ENCODE measurements at regions of chr5 and their contacts with region 1.

Region 1: GRCh38 chr5:133968049-133968980 is at the start of gene C5orf15:
- DNase-seq: peak; percentile 91 to 98
- H3K4me3 ChIP-seq: peak within 1 kb of the TSS; percentile 69 to 77
- H3K27ac ChIP-seq: peak within 1 kb of the TSS; percentile 93
- H3K4me1 ChIP-seq: peaks cover 0 to 2% of the 10 kb centered on the region in 2 donors
- H3K27me3 ChIP-seq: no peaks in the 10 kb centered on the region
- CTCF ChIP-seq: peak in 2 of 3 experiments; percentile 12 to 22
- total RNA-seq, gene C5orf15: 177 TPM

Region 2: GRCh38 chr5:133930061-133930812 is 38.1 kb before region 1 on chr5:
- intact Hi-C with region 1: loop called (anchors 2 kb)
- DNase-seq: peak; percentile 19 to 84
- H3K4me3 ChIP-seq: peak overlapping the region in 1 of 2 donors; percentile 44
- H3K27ac ChIP-seq: peak overlapping the region; percentile 45 to 60
- H3K4me1 ChIP-seq: peaks cover 4 to 30% of the 10 kb centered on the region in 2 donors
- H3K27me3 ChIP-seq: no peaks in the 10 kb centered on the region
- CTCF ChIP-seq: no peak

Region 3: DNA sequence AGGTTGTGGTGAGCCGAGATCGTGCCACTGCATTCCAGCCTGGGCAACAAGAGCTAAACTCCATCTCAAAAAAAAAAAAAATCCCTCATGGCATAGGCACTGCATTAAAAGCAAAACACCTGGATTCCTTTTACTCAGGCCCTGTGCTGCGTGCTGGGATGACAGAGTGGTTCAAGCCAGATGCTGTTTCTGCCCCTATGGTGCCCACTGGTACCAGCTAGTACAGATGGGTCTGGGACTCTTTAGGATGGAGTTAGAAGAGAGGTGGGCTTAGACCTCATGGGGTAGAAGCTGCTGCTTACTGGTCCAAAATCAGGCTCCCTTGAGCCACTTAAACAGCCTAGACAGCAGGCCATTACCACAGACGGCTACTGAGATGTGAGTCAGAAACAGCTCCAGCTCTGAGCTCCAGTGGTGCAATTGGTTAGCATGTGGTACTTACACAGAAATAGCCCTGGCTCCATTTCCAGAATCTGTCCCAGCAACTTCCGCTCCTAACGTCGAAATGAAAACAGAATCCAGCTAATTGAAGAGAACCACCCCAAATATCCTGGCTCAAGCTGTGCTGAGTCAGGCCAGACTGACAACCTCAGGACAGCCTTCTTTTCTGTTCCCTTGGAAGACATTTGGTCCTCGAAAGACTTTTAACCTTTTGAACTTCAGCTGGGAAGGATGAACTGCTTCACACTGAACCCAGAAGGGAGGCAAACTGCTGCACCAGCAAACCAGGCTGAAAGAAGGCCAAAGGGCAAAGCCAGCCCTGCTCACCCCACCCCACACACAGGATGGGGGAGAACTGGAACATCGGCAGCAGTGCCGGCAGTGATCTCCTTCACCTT is 15.4 kb before region 1 on chr5:
- intact Hi-C with region 1: loop called (anchors 1 kb)
- DNase-seq: peak; percentile 64 to 95
- H3K4me3 ChIP-seq: no peak overlapping the region
- H3K27ac ChIP-seq: peak overlapping the region; percentile 91 to 95
- H3K4me1 ChIP-seq: peaks cover 18 to 33% of the 10 kb centered on the region in 2 donors
- H3K27me3 ChIP-seq: no peaks in the 10 kb centered on the region
- CTCF ChIP-seq: no peak

Region 4: GRCh38 chr5:133985540-133986180 is 17.3 kb after region 1 on chr5:
- intact Hi-C with region 1: no loop called
- DNase-seq: no peak
- H3K4me3 ChIP-seq: no peak overlapping the region
- H3K27ac ChIP-seq: no peak overlapping the region
- H3K4me1 ChIP-seq: no peaks in the 10 kb centered on the region
- H3K27me3 ChIP-seq: no peaks in the 10 kb centered on the region
- CTCF ChIP-seq: no peak

Region 5: GRCh38 chr5:134004592-134005375 is 36.5 kb after region 1 on chr5 and contains the start of gene VDAC1:
- intact Hi-C with region 1: loop called (anchors 1 kb)
- DNase-seq: peak; percentile 31 to 91
- H3K4me3 ChIP-seq: peak within 1 kb of the TSS; percentile 97
- H3K27ac ChIP-seq: peak within 1 kb of the TSS; percentile 100
- H3K4me1 ChIP-seq: peaks cover 28 to 41% of the 10 kb centered on the region in 2 donors
- H3K27me3 ChIP-seq: no peaks in the 10 kb centered on the region
- CTCF ChIP-seq: no peak
- total RNA-seq, gene VDAC1: 50.2 TPM

Measured in ascending aorta (tissue), 2 donors.